Caco-2 (cell line): ENCODE measurements at regions of chr3 and their contacts with region 1.

Region 1: GRCh38 chr3:72738752-72739530 is 109.3 kb downstream of the SHQ1 start:
- DNase-seq: peak; percentile 67 to 74
- H3K4me3 ChIP-seq: peak overlapping the region; percentile 64
- H3K4me3 Mint-ChIP-seq: peak overlapping the region; percentile 78
- H3K27ac Mint-ChIP-seq: no peak overlapping the region
- H3K4me1 ChIP-seq: peaks cover 4% of the 10 kb centered on the region
- H3K4me1 Mint-ChIP-seq: peaks cover 17% of the 10 kb centered on the region
- H3K27me3 ChIP-seq: no peaks in the 10 kb centered on the region
- H3K27me3 Mint-ChIP-seq: no peaks in the 10 kb centered on the region
- CTCF ChIP-seq: no peak

Region 2: GRCh38 chr3:72665701-72666443 is 73.1 kb before region 1 on chr3:
- CTCF ChIA-PET with region 1: interaction called, 4 read pairs
- POLR2A ChIA-PET with region 1: no interaction called
- intact Hi-C with region 1: loop called (anchors 5 kb)
- DNase-seq: peak in 1 of 2 experiments; percentile 67
- H3K4me3 ChIP-seq: no peak overlapping the region
- H3K4me3 Mint-ChIP-seq: no peak overlapping the region
- H3K27ac Mint-ChIP-seq: no peak overlapping the region
- H3K4me1 ChIP-seq: no peaks in the 10 kb centered on the region
- H3K4me1 Mint-ChIP-seq: no peaks in the 10 kb centered on the region
- H3K27me3 ChIP-seq: no peaks in the 10 kb centered on the region
- H3K27me3 Mint-ChIP-seq: no peaks in the 10 kb centered on the region
- CTCF ChIP-seq: peak; percentile 49 to 57

Region 3: DNA sequence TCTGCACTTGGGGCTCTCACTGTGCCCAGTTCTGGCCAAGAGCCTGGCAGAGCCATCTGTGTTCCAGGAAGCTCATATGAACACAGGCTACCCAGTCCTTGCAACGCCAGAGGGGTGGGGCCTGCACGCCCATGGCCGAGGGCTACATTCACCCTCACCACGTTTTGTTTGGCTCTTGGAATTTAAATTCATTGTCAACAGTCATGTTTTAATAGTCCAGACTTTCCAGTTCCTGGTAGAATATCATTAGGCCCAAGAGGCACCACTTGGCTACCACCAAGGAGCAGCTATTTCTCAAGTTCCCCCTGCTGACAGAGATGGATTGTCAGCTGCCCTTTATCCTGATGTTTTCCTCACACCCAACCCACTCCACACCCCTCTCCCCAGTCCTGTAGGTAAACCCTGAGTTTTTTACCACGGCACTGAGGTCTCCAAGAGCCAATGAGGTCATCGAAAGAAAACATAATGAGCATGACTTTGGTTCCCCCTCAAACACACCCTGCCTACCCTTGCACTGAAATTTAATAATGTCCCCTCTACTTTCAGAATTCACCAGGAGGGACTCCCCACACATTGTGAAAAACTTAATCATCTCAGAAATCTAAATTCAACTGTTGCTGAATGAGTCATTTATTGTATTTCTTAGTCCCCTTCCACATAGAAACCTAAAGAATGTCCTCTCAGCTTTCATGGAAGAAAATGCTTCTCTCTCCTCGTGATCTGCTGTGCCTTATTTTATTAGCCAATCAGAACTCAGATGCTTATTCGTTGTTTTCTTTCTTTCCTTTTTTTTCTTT is 15.8 kb before region 1 on chr3:
- CTCF ChIA-PET with region 1: no interaction called
- POLR2A ChIA-PET with region 1: interaction called, 13 read pairs
- intact Hi-C with region 1: no loop called
- DNase-seq: no peak
- H3K4me3 ChIP-seq: no peak overlapping the region
- H3K4me3 Mint-ChIP-seq: no peak overlapping the region
- H3K27ac Mint-ChIP-seq: peak overlapping the region; percentile 26
- H3K4me1 ChIP-seq: peaks cover 14% of the 10 kb centered on the region
- H3K4me1 Mint-ChIP-seq: peaks cover 33% of the 10 kb centered on the region
- H3K27me3 ChIP-seq: no peaks in the 10 kb centered on the region
- H3K27me3 Mint-ChIP-seq: no peaks in the 10 kb centered on the region
- CTCF ChIP-seq: no peak

Region 4: DNA sequence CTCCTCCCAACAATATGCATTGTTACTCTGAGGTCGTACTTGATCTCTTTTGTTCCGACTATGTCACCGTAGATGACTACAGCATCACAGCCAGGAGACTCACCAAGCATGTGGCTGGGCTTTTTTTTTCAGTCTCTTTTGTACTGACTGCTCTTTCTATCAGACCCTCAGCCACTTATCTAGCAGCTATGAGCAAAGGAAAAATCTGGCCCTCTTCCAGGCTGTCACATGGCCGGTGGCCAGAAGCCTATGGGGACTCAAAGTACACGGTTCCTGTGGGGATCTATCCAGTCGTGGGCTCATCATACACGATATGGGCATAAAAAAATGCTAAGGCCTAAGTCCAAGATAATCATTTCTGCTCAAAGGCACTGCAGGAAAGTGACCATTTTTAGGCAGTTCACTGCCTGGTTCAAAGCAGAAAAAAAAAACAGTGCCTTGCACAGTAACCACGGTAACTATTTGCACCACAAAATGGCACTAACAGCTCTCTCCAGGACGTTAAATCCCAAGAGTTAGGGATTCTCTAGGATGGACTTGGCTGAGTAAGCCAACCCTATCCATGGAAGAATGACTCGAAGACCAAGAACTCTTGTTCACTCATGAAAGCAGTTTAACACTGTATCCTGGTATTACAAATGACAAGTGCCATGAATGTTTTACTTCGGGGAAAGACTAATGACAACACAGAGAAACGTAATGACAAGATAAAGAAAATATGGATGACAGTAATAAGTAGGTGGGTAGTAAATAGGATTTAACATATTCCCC is 59.0 kb after region 1 on chr3:
- CTCF ChIA-PET with region 1: no interaction called
- POLR2A ChIA-PET with region 1: no interaction called
- intact Hi-C with region 1: no loop called
- DNase-seq: no peak
- H3K4me3 ChIP-seq: no peak overlapping the region
- H3K4me3 Mint-ChIP-seq: no peak overlapping the region
- H3K27ac Mint-ChIP-seq: no peak overlapping the region
- H3K4me1 ChIP-seq: no peaks in the 10 kb centered on the region
- H3K4me1 Mint-ChIP-seq: no peaks in the 10 kb centered on the region
- H3K27me3 ChIP-seq: no peaks in the 10 kb centered on the region
- H3K27me3 Mint-ChIP-seq: no peaks in the 10 kb centered on the region
- CTCF ChIP-seq: no peak

Region 5: DNA sequence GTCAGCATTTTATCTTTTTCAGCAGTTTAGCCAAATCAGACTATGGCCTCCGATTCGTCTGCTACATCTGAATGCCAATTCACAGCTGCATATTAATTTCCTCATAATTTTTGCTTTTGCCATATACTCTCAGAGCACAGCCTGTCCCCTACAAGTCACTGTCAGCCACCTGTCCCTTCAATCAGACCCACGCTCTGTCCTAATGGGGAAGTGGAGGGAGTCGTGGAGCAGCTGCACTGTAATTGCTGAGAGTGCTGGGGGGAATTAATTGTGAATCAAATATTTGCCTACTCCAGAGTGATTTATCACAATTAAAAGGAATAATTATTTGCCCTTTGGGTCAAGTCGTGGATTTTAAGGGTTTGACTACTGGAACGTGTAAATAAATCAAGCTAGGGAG is 398.0 kb after region 1 on chr3:
- CTCF ChIA-PET with region 1: no interaction called
- POLR2A ChIA-PET with region 1: no interaction called
- intact Hi-C with region 1: no loop called
- DNase-seq: no peak
- H3K4me3 ChIP-seq: no peak overlapping the region
- H3K4me3 Mint-ChIP-seq: no peak overlapping the region
- H3K27ac Mint-ChIP-seq: no peak overlapping the region
- H3K4me1 ChIP-seq: no peaks in the 10 kb centered on the region
- H3K4me1 Mint-ChIP-seq: no peaks in the 10 kb centered on the region
- H3K27me3 ChIP-seq: no peaks in the 10 kb centered on the region
- H3K27me3 Mint-ChIP-seq: no peaks in the 10 kb centered on the region
- CTCF ChIP-seq: no peak

Region 6: DNA sequence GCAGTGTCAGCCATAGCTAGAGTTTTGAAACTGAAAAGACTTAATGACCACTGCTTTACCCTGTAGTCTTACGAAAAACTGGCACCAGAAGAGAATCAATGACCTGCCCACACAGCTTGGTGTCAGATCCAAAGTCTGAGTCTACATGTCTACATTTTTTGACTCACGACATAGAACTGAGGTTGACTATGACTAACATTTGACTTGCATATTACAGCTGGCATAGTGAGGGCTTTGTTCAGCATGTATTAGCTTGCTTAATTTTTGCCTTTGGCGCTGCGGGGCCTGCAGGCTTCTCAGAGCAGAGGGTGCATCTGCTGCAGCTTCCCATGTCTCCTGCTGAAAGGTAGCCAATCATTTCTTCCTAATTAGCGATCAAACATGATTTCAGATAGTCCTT is 489.5 kb after region 1 on chr3:
- CTCF ChIA-PET with region 1: no interaction called
- POLR2A ChIA-PET with region 1: no interaction called
- intact Hi-C with region 1: no loop called
- DNase-seq: no peak
- H3K4me3 ChIP-seq: no peak overlapping the region
- H3K4me3 Mint-ChIP-seq: no peak overlapping the region
- H3K27ac Mint-ChIP-seq: no peak overlapping the region
- H3K4me1 ChIP-seq: no peaks in the 10 kb centered on the region
- H3K4me1 Mint-ChIP-seq: no peaks in the 10 kb centered on the region
- H3K27me3 ChIP-seq: no peaks in the 10 kb centered on the region; the same call in 1 of the 2 replicates
- H3K27me3 Mint-ChIP-seq: no peaks in the 10 kb centered on the region
- CTCF ChIP-seq: no peak